Heart right ventricle (tissue), 16 donors: ENCODE measurements at regions of chr1 and their contacts with region 1.

Region 1: GRCh38 chr1:64242895-64243756 is 39.7 kb downstream of the UBE2U start:
- DNase-seq: no peak
- ATAC-seq: peak in 3 of 8 donors; percentile 39 to 59 (median 45)
- H3K4me3 ChIP-seq: no peak overlapping the region
- H3K27ac ChIP-seq: no peak overlapping the region
- H3K4me1 ChIP-seq: peaks cover 0 to 23% (median 8%) of the 10 kb centered on the region in 9 donors
- H3K27me3 ChIP-seq: peaks cover 0 to 3% (median 0%) of the 10 kb centered on the region in 7 donors
- CTCF ChIP-seq: peak in 7 of 9 donors; percentile 30 to 62 (median 52)

Region 2: DNA sequence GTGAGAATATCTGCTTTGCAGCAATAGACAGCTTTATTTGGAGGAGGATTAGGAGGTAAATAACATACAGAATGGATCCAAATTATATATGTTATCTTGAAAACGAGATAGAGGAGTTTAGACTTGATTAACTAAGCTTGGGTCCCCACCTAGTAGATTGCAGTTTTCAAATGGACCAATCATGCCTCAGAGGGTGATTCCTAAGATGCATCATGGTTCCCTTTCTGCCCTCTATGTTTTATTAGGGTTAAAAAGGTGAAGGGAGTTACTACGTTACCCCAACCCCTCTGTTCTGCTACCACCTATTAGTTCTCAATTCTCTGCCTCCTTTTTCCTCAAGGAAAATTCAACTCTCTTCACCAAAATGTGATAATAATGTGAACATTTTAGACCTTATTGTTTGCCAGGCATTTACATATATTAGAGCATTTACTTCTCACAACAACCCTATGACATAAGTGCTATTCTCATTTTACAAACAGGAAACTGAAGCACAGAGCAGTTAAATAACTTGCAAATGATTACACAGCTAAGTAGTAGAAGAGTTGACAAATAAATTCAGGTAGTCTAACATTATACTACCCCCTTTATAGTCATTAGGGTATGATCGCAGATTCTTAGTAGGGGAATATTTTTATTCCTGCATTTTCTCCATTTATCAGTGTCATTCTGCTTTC is 673.3 kb before region 1 on chr1:
- intact Hi-C with region 1: loop called in 3 of 10 experiments (anchors 5 to 10 kb)
- DNase-seq: no peak
- ATAC-seq: no peak
- H3K4me3 ChIP-seq: no peak overlapping the region
- H3K27ac ChIP-seq: no peak overlapping the region
- H3K4me1 ChIP-seq: peaks cover 0 to 4% (median 0%) of the 10 kb centered on the region in 9 donors
- H3K27me3 ChIP-seq: no peaks in the 10 kb centered on the region
- CTCF ChIP-seq: no peak

Region 3: GRCh38 chr1:63615768-63616420 is 627.2 kb before region 1 on chr1:
- intact Hi-C with region 1: loop called (anchors 2 to 10 kb)
- DNase-seq: peak in 1 of 2 donors; percentile 60
- ATAC-seq: peak in 7 of 8 donors; percentile 59 to 67 (median 63)
- H3K4me3 ChIP-seq: no peak overlapping the region
- H3K27ac ChIP-seq: no peak overlapping the region
- H3K4me1 ChIP-seq: peaks cover 0 to 43% (median 10%) of the 10 kb centered on the region in 9 donors
- H3K27me3 ChIP-seq: no peaks in the 10 kb centered on the region
- CTCF ChIP-seq: peak; percentile 60 to 84 (median 81)

Region 4: DNA sequence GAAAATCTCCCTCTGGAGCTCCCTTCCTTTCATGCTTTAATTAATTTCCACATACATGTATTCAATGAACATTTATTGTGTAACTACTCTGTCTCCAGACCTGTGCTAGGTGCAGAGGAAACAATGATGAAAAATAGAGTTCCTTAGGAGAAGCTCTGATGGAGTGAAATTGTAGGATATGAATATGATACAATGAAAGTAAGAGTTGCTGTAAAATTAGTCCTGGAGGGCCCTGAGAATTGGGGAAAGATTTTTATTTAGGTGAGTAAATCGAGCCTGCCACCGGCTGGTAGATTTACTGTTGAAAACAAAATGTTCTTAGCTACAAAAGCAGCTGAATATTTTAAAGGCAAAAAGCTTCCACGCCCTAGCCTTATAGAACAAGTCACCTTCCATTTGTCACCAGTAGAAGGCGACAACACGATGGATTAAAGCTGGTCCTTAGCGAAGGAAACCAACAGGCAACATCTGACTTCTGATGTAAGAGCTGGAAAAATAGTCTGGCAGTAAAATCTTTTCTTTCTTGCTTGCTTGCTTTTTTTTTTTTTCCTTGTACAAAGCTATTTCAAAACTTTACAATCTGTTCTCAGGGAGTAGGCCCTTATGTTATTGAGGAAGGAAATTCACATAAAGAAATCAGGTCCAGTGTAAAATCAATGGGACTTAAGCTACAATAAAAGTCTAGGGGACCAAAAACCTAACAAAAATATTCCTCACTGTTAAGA is 551.3 kb before region 1 on chr1:
- intact Hi-C with region 1: loop called in 5 of 10 experiments (anchors 2 to 5 kb)
- DNase-seq: peak in 1 of 2 donors; percentile 65
- ATAC-seq: peak; percentile 69 to 93 (median 87)
- H3K4me3 ChIP-seq: no peak overlapping the region
- H3K27ac ChIP-seq: peak overlapping the region in 6 of 10 donors; percentile 2 to 67 (median 28)
- H3K4me1 ChIP-seq: peaks cover 3 to 18% (median 9%) of the 10 kb centered on the region in 9 donors
- H3K27me3 ChIP-seq: no peaks in the 10 kb centered on the region
- CTCF ChIP-seq: peak; percentile 40 to 80 (median 75)

Region 5: GRCh38 chr1:64356636-64357256 is 113.6 kb after region 1 on chr1:
- intact Hi-C with region 1: no loop called
- DNase-seq: no peak
- ATAC-seq: no peak
- H3K4me3 ChIP-seq: no peak overlapping the region
- H3K27ac ChIP-seq: no peak overlapping the region
- H3K4me1 ChIP-seq: peaks cover 0 to 12% (median 0%) of the 10 kb centered on the region in 9 donors
- H3K27me3 ChIP-seq: no peaks in the 10 kb centered on the region
- CTCF ChIP-seq: no peak

Region 6: DNA sequence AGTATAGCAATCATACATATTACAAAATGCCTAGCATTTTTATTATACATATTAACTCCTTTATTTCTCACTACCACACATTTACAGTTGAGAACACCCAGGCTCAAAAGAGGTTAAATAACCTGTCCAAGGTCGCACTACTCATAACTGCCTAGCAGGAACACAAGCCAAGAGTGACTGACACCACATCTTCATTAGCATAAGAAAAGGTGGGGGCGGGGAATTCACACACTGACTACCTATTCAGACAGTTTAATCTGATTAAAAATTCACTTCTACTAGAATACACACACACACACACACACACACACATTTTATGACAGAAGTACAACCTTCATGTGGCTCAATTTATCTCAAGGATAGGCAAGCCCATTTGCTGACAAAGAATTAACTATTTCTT is 149.0 kb after region 1 on chr1:
- intact Hi-C with region 1: no loop called
- DNase-seq: no peak
- ATAC-seq: no peak
- H3K4me3 ChIP-seq: no peak overlapping the region
- H3K27ac ChIP-seq: no peak overlapping the region
- H3K4me1 ChIP-seq: peaks cover 0 to 6% (median 0%) of the 10 kb centered on the region in 9 donors
- H3K27me3 ChIP-seq: no peaks in the 10 kb centered on the region
- CTCF ChIP-seq: no peak

Region 7: DNA sequence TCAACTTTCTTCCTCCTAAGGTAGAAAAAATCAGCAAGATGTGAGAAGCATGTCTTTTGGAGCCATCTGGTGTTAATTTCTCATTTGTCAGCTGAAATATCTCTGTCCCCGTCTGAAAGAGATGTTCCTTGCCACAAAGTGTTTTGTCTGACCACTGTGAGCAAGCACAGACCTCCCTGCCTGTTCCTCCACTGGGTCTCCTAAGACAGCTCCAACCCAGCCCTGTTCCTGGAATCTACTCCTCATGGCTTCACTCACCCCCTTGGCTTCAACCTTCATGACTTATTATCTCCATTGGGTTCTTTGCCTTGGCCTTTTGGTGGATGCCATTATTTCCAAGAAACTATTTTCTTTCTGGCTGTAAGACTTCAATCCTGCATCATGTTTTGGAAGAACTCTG is 161.1 kb after region 1 on chr1:
- intact Hi-C with region 1: no loop called
- DNase-seq: no peak
- ATAC-seq: no peak
- H3K4me3 ChIP-seq: no peak overlapping the region
- H3K27ac ChIP-seq: no peak overlapping the region
- H3K4me1 ChIP-seq: no peaks in the 10 kb centered on the region
- H3K27me3 ChIP-seq: no peaks in the 10 kb centered on the region
- CTCF ChIP-seq: no peak